ENCODE measurements at regions of chr11 and their contacts with region 1.

Region 1: GRCh38 chr11:111446404-111447111 is 65.6 kb downstream of the BTG4 start:
- DNase-seq: peak; percentile 84
- H3K4me3 Mint-ChIP-seq: no peak overlapping the region
- H3K27ac Mint-ChIP-seq: peak overlapping the region; percentile 56
- H3K4me1 Mint-ChIP-seq: peaks cover 14% of the 10 kb centered on the region
- H3K27me3 Mint-ChIP-seq: no peaks in the 10 kb centered on the region

Region 2: GRCh38 chr11:109680127-109680526 is 1766.4 kb before region 1 on chr11:
- CTCF ChIA-PET with region 1: no interaction called
- POLR2A ChIA-PET with region 1: no interaction called
- intact Hi-C with region 1: no loop called
- DNase-seq: no peak
- H3K4me3 Mint-ChIP-seq: no peak overlapping the region
- H3K27ac Mint-ChIP-seq: no peak overlapping the region
- H3K4me1 Mint-ChIP-seq: no peaks in the 10 kb centered on the region
- H3K27me3 Mint-ChIP-seq: no peaks in the 10 kb centered on the region

Region 3: GRCh38 chr11:111408789-111409727 is 37.5 kb before region 1 on chr11:
- CTCF ChIA-PET with region 1: no interaction called
- POLR2A ChIA-PET with region 1: no interaction called
- intact Hi-C with region 1: no loop called
- DNase-seq: peak; percentile 18
- H3K4me3 Mint-ChIP-seq: no peak overlapping the region
- H3K27ac Mint-ChIP-seq: no peak overlapping the region
- H3K4me1 Mint-ChIP-seq: peaks cover 31% of the 10 kb centered on the region
- H3K27me3 Mint-ChIP-seq: no peaks in the 10 kb centered on the region

Region 4: DNA sequence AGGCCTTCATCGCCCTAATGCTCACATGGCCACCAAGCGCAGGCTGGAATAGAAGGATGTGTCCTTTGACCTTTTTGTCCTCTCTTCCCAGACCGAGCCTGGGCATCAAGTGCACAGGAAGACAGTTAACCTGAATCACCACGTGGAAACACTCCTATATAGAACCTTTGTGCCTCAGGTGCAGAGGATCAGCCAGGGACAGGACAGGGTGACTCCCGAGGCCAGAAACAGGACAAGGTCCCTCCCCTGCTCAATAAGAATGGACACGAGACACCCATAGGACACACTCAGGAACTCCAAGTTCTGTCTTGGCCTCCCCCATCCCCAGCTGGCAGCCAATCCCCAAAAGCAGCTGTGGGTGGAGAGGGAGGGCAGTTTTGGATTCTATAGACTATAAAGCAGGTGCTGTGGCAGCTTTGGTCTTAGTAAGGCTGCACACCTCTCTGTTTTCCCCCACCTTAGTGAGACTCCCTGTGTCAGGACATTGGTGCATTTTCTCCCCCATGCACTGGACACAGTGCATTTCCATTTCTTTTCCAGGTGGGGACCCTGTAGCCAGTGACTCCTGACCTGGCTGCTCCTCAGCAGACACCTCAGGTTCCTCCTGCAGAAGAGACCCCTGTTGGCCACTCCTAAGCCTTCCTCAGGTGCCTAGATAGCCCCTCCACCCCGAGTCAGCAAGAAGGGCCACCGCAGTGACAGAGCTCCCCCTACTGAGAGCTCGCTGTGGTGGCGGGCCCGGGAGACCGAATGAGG is 23.9 kb before region 1 on chr11:
- CTCF ChIA-PET with region 1: interaction called, 38 read pairs
- POLR2A ChIA-PET with region 1: no interaction called
- intact Hi-C with region 1: no loop called
- DNase-seq: peak; percentile 73
- H3K4me3 Mint-ChIP-seq: no peak overlapping the region
- H3K27ac Mint-ChIP-seq: no peak overlapping the region
- H3K4me1 Mint-ChIP-seq: peaks cover 4% of the 10 kb centered on the region
- H3K27me3 Mint-ChIP-seq: no peaks in the 10 kb centered on the region

Region 5: GRCh38 chr11:111435046-111435698 is 11.4 kb before region 1 on chr11:
- CTCF ChIA-PET with region 1: interaction called, 38 read pairs
- POLR2A ChIA-PET with region 1: no interaction called
- intact Hi-C with region 1: loop called (anchors 1 kb)
- DNase-seq: no peak
- H3K4me3 Mint-ChIP-seq: no peak overlapping the region
- H3K27ac Mint-ChIP-seq: no peak overlapping the region
- H3K4me1 Mint-ChIP-seq: peaks cover 5% of the 10 kb centered on the region
- H3K27me3 Mint-ChIP-seq: peaks cover 3% of the 10 kb centered on the region